ENCODE measurements at regions of chr6 and their contacts with region 1.

Region 1: DNA sequence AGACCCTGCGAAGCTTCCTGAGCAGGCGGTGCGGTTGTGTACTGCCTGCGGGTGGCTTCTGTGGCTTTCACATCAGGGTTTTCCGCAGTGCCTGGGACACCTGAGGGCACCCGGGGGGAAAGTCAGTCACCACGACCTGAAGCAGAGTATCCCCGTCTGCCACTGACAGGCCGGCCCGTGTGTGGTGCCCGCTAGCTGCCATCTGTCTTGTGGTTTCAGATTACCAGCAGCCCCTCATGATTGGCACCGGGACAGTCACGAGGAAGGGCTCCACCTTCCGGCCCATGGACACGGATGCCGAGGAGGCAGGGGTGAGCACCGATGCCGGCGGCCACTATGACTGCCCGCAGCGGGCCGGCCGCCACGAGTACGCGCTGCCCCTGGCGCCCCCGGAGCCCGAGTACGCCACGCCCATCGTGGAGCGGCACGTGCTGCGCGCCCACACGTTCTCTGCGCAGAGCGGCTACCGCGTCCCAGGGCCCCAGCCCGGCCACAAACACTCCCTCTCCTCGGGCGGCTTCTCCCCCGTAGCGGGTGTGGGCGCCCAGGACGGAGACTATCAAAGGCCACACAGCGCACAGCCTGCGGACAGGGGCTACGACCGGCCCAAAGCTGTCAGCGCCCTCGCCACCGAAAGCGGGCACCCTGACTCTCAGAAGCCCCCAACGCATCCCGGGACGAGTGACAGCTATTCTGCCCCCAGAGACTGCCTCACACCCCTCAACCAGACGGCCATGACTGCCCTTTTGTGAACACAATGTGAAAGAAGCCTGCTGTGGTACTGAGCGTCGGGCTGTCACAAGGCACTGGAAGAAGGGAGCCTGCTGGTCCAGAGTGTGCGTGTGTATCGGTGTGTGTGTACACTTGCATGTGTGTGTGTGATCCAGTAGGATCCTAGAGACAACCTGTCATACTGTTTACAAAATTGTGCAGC is 54.4 kb downstream of the GOPC start:
- DNase-seq: peak; percentile 81
- H3K4me3 Mint-ChIP-seq: peak overlapping the region; percentile 81
- H3K27ac Mint-ChIP-seq: peak overlapping the region; percentile 85
- H3K4me1 Mint-ChIP-seq: peaks cover 38% of the 10 kb centered on the region
- H3K27me3 Mint-ChIP-seq: peaks cover 10% of the 10 kb centered on the region

Region 2: DNA sequence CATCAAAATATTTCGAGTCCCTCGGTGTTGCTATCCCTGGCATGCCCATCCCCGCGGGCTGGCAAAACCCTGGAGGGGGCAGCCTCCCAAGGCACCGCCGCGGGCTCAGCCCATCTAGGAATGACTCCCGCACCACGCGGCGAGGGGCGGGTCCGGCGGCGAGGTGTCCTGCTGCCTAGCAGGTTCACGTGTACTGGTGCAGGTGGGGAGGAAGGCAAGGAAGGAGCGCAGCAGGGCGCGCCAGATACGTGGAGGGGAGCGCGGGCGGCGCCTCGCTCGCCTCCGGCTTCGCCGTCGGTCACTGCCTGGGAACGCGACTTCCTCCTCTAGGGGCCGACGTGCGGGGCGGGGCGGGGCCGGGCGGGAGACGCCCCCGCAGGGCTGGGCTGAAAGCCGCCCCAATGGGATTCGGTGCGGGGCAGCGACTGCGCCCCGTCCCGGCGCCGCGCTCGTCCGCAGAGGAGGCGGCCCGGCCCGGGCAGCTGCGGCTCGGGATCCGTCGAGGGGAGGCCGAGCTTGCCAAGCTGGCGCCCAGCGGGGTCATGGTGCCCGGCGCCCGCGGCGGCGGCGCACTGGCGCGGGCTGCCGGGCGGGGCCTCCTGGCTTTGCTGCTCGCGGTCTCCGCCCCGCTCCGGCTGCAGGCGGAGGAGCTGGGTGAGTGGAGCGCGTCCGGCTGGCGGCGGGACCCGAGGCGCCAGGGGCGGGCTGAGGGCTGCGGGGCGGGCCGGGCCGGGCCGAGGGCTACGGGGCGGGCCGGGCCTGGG is 65.5 kb before region 1 on chr6 and contains the start of gene DCBLD1:
- intact Hi-C with region 1: loop called (anchors 1 kb)
- DNase-seq: peak; percentile 90
- H3K4me3 Mint-ChIP-seq: peak within 1 kb of the TSS; percentile 95
- H3K27ac Mint-ChIP-seq: peak within 1 kb of the TSS; percentile 86
- H3K4me1 Mint-ChIP-seq: peaks cover 16% of the 10 kb centered on the region
- H3K27me3 Mint-ChIP-seq: peaks cover 61% of the 10 kb centered on the region
- total RNA-seq, gene DCBLD1: 3.7 and 4.8 TPM in 2 replicates

Region 3: DNA sequence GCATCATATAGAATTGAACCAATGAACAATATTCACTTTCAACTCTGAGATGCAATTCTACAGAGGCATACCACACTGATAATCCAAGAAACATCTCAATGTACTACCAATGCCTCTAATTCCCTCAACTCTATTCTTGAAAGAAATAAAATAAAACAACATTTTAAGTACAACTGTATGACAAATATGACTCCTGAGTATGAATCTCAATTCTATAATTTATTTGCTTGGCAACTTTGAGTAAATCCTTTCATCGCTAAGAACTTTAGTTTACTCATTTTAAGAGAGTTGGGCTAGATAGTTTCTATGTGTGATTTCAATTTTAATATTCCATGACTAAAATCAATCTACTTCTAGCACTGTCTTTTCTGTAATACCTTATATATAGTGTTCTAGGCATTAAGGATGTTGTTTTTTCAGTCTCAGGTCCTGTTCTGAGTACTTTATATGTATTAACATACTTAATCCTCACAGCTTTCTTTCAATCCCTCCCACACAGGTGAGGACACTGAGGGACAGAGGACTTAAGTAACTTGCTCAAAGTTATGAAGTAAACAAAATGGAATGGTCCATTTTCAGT is 21.0 kb after region 1 on chr6:
- intact Hi-C with region 1: loop called (anchors 2 kb)
- DNase-seq: no peak
- H3K4me3 Mint-ChIP-seq: no peak overlapping the region
- H3K27ac Mint-ChIP-seq: no peak overlapping the region
- H3K4me1 Mint-ChIP-seq: peaks cover 7% of the 10 kb centered on the region
- H3K27me3 Mint-ChIP-seq: no peaks in the 10 kb centered on the region

Region 4: DNA sequence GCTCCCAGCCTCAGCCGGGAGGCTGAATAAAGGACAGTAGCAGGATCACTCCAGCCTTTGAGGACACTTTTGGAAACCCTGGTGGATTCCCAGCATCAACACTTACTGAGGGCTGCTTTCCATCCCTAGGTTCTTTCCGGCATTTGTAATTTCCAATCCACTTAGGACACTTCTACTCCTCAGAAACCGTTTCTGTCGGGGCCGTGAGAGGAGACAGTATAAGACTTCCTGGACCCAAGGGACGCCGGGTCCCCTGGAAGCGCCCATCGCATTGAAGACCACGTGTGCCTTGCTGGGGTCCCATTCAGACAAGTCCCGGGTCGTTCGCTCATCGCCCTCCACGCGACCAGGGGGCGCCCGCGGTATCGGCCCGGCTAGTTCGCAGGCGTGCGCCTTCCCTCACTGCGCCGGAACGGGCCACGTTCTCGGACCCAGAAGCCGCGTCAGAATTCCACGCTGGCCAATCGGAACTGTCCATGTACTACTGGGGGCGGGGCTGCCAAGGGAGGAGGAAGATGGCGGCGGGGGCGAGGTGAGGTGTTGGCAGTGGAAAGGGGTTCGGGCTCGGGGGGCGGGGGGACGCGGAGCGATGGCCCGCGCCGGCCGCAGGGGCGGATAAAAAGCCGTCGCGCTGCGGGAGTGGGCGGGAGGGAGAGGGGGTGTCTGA is 127.2 kb after region 1 on chr6 and contains the start of gene NUS1:
- intact Hi-C with region 1: loop called (anchors 2 kb)
- DNase-seq: peak; percentile 99
- H3K4me3 Mint-ChIP-seq: peak within 1 kb of the TSS; percentile 89
- H3K27ac Mint-ChIP-seq: peak within 1 kb of the TSS; percentile 93
- H3K4me1 Mint-ChIP-seq: peaks cover 45% of the 10 kb centered on the region
- H3K27me3 Mint-ChIP-seq: no peaks in the 10 kb centered on the region
- total RNA-seq, gene NUS1: 49.6 and 49.7 TPM in 2 replicates